ENCODE measurements at regions of chr5 and their contacts with region 1.

Region 1: GRCh38 chr5:146107901-146108300 is 2.5 kb upstream of the PLAC8L1 start:
- DNase-seq: no peak
- H3K4me3 ChIP-seq: no peak overlapping the region
- H3K27ac ChIP-seq: no peak overlapping the region
- H3K4me1 ChIP-seq: peaks cover 44% of the 10 kb centered on the region
- CTCF ChIP-seq: no peak

Region 2: GRCh38 chr5:146079695-146080361 is 28.1 kb before region 1 on chr5:
- CTCF ChIA-PET with region 1: no interaction called
- POLR2A ChIA-PET with region 1: interaction called, 10 read pairs
- intact Hi-C with region 1: loop called (anchors 2 kb)
- DNase-seq: no peak
- H3K4me3 ChIP-seq: no peak overlapping the region
- H3K27ac ChIP-seq: no peak overlapping the region
- H3K4me1 ChIP-seq: peaks cover 8% of the 10 kb centered on the region
- CTCF ChIP-seq: no peak

Measured in OCI-LY7 (cell line).